ENCODE measurements at regions of chr20 and their contacts with region 1.

Region 1: GRCh38 chr20:8788831-8789230 is 280.1 kb upstream of the PLCB4 start:
- DNase-seq: no peak
- ATAC-seq: no peak
- H3K4me3 ChIP-seq: no peak overlapping the region
- H3K4me3 Mint-ChIP-seq: no peak overlapping the region
- H3K27ac ChIP-seq: no peak overlapping the region
- H3K27ac Mint-ChIP-seq: no peak overlapping the region
- H3K4me1 ChIP-seq: no peaks in the 10 kb centered on the region
- H3K4me1 Mint-ChIP-seq: no peaks in the 10 kb centered on the region
- H3K27me3 ChIP-seq: no peaks in the 10 kb centered on the region
- H3K27me3 Mint-ChIP-seq: no peaks in the 10 kb centered on the region

Region 2: DNA sequence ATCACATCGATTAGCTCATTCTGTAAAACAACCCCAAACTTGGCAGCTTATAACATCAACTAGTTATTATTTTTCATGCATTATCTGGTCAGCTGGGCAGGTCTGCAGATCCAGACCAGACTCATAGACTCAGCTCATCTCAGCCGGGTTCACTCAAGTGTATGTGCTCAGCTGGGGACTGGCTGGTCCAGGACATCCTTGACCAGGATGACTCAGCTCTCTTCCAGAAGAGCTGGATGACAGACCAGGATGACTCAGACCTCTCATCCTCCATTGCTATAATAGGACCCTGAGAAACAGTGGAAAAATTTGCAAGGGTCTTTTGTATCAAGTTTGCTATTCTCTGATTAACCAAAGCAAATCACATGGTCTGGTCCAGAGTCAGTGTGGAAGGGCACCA is 32.4 kb before region 1 on chr20:
- CTCF ChIA-PET with region 1: interaction called in 1 of 2 experiments, 10 read pairs
- POLR2A ChIA-PET with region 1: no interaction called
- DNase-seq: no peak
- ATAC-seq: no peak
- H3K4me3 ChIP-seq: no peak overlapping the region
- H3K4me3 Mint-ChIP-seq: no peak overlapping the region
- H3K27ac ChIP-seq: no peak overlapping the region
- H3K27ac Mint-ChIP-seq: no peak overlapping the region
- H3K4me1 ChIP-seq: no peaks in the 10 kb centered on the region
- H3K4me1 Mint-ChIP-seq: peaks cover 0 to 5% (median 0%) of the 10 kb centered on the region in 3 donors
- H3K27me3 ChIP-seq: no peaks in the 10 kb centered on the region
- H3K27me3 Mint-ChIP-seq: no peaks in the 10 kb centered on the region

Region 3: DNA sequence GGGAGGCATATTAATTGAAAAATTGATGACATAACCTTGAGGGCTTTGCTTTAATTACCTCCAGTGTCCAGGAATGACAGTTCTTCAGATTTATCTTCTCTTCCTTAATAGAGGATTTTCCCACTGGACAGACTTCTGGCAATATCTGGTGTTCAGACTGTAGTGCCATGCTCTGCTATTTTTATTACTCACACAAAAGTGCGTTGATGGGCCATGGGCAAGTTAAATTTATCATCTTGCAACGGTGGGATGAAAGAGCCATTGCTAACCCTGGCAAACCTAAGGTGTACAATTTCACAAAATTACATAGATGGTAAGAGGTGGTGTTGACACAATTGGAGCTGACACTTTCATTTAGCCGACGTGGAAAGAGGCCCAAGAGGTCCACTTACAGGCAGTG is 26.4 kb after region 1 on chr20:
- CTCF ChIA-PET with region 1: no interaction called
- POLR2A ChIA-PET with region 1: no interaction called
- DNase-seq: no peak
- ATAC-seq: no peak
- H3K4me3 ChIP-seq: no peak overlapping the region
- H3K4me3 Mint-ChIP-seq: no peak overlapping the region
- H3K27ac ChIP-seq: no peak overlapping the region
- H3K27ac Mint-ChIP-seq: no peak overlapping the region
- H3K4me1 ChIP-seq: no peaks in the 10 kb centered on the region
- H3K4me1 Mint-ChIP-seq: no peaks in the 10 kb centered on the region
- H3K27me3 ChIP-seq: no peaks in the 10 kb centered on the region
- H3K27me3 Mint-ChIP-seq: no peaks in the 10 kb centered on the region